CD4-positive, alpha-beta memory T cell (primary cell): ENCODE measurements at regions of chr7 and their contacts with region 1.

Region 1: DNA sequence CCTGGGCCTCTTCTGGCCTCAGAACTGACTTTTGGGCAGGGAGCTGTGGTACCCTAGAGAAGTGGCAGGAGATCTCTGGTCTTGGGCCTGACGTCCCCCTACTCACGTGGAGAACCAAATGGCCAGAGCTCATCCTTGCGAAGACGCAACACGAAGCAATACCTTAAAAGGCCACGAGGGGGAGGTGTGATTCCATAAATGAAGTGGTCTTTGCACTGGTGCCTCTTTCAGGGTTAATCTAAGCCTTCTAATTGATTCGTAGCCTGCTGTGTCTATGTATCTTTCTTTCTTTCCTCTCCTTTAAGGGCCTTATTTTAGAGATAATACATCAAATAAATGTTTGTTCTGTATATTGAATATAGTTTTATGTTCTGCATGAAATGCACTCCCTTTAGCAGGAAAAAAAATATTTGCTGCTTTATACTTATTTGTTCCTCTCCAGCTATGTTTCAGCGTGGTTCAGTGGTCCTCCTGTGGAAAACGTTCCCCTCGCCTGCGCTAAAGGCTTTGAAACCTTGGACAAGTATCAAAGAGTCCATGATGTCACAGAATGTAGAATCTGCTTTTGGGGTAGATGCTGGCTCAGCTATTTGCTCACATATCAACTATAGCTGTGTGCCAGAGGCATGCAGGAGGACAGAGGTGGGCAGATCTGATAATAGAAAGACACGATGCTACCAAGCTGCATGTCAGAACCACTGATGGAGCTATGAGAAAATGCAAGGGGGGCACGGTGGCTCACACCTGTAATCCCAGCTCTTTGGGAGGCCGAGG is 41.0 kb downstream of the STRA8 start:
- DNase-seq: peak; percentile 55 to 65 (median 58)
- H3K4me3 ChIP-seq: no peak overlapping the region
- H3K4me3 Mint-ChIP-seq: no peak overlapping the region
- H3K27ac ChIP-seq: no peak overlapping the region
- H3K27ac Mint-ChIP-seq: no peak overlapping the region
- H3K4me1 ChIP-seq: no peaks in the 10 kb centered on the region
- H3K4me1 Mint-ChIP-seq: peaks cover 0 to 4% (median 3%) of the 10 kb centered on the region in 4 donors
- H3K27me3 ChIP-seq: no peaks in the 10 kb centered on the region
- H3K27me3 Mint-ChIP-seq: peaks cover 4 to 6% of the 10 kb centered on the region in 2 donors

Region 2: GRCh38 chr7:134962270-134962780 is 312.4 kb before region 1 on chr7:
- CTCF ChIA-PET with region 1: no interaction called
- POLR2A ChIA-PET with region 1: no interaction called
- intact Hi-C with region 1: no loop called
- DNase-seq: no peak
- H3K4me3 ChIP-seq: no peak overlapping the region
- H3K4me3 Mint-ChIP-seq: no peak overlapping the region
- H3K27ac ChIP-seq: no peak overlapping the region
- H3K27ac Mint-ChIP-seq: no peak overlapping the region
- H3K4me1 ChIP-seq: no peaks in the 10 kb centered on the region
- H3K4me1 Mint-ChIP-seq: no peaks in the 10 kb centered on the region
- H3K27me3 ChIP-seq: no peaks in the 10 kb centered on the region
- H3K27me3 Mint-ChIP-seq: peaks cover 9 to 12% of the 10 kb centered on the region in 2 donors

Region 3: DNA sequence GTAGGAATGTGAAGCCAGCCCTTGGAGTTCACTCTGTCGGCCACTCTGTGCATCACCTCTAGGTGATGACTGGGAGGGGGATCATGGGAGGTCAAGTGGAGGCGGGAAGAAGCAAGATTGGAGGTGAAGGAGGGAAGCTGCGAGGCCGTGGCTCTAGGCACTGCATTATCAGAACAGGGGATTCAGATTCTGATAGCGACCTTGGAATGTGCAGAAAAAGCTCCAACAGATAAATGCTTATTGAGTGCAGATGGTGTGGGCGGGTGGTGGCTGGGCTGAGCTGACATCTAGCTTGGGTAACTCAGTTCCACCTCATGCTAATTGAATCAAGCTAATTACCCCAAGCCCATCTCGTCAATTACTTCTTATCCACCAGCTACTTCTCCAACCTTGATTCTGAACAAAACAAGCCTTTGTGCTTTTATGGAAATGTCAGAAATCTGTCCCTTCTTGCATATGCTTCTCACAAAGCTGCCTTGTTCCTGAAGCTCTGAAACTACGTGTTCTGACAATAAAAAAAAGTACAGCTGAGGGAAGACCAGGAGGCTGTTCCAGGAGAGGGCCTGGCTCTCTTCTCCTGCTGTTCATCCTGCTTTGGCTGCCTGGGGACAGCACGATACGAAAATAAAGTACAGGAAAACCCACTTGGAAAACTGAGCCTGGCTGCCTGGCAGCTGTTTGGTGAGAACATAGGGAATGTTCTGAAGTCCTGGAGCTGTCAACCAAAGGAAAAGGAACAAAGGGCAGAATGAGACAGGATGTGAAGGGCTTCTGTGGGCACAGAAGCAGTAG is 13.6 kb before region 1 on chr7:
- CTCF ChIA-PET with region 1: interaction called, 25 read pairs
- POLR2A ChIA-PET with region 1: no interaction called
- intact Hi-C with region 1: no loop called
- DNase-seq: no peak
- H3K4me3 ChIP-seq: no peak overlapping the region
- H3K4me3 Mint-ChIP-seq: no peak overlapping the region
- H3K27ac ChIP-seq: no peak overlapping the region
- H3K27ac Mint-ChIP-seq: no peak overlapping the region
- H3K4me1 ChIP-seq: no peaks in the 10 kb centered on the region
- H3K4me1 Mint-ChIP-seq: no peaks in the 10 kb centered on the region
- H3K27me3 ChIP-seq: no peaks in the 10 kb centered on the region
- H3K27me3 Mint-ChIP-seq: peaks cover 5 to 6% of the 10 kb centered on the region in 2 donors

Region 4: GRCh38 chr7:135286876-135287275 is 12.2 kb after region 1 on chr7:
- CTCF ChIA-PET with region 1: interaction called, 33 read pairs
- POLR2A ChIA-PET with region 1: no interaction called
- intact Hi-C with region 1: no loop called
- DNase-seq: no peak
- H3K4me3 ChIP-seq: no peak overlapping the region
- H3K4me3 Mint-ChIP-seq: no peak overlapping the region
- H3K27ac ChIP-seq: no peak overlapping the region
- H3K27ac Mint-ChIP-seq: no peak overlapping the region
- H3K4me1 ChIP-seq: peaks cover 13% of the 10 kb centered on the region
- H3K4me1 Mint-ChIP-seq: peaks cover 10 to 17% (median 13%) of the 10 kb centered on the region in 4 donors
- H3K27me3 ChIP-seq: no peaks in the 10 kb centered on the region
- H3K27me3 Mint-ChIP-seq: no peaks in the 10 kb centered on the region

Region 5: GRCh38 chr7:135335628-135336139 is 61.0 kb after region 1 on chr7:
- CTCF ChIA-PET with region 1: interaction called, 30 read pairs
- POLR2A ChIA-PET with region 1: no interaction called
- intact Hi-C with region 1: no loop called
- DNase-seq: peak; percentile 9 to 42 (median 19)
- H3K4me3 ChIP-seq: no peak overlapping the region
- H3K4me3 Mint-ChIP-seq: no peak overlapping the region
- H3K27ac ChIP-seq: no peak overlapping the region
- H3K27ac Mint-ChIP-seq: no peak overlapping the region
- H3K4me1 ChIP-seq: no peaks in the 10 kb centered on the region
- H3K4me1 Mint-ChIP-seq: peaks cover 0 to 2% (median 0%) of the 10 kb centered on the region in 4 donors
- H3K27me3 ChIP-seq: no peaks in the 10 kb centered on the region
- H3K27me3 Mint-ChIP-seq: peaks cover 2% of the 10 kb centered on the region in 2 donors